PC-9 (cell line): ENCODE measurements at regions of chr2 and their contacts with region 1.

Region 1: GRCh38 chr2:3386448-3386958 is 7.0 kb downstream of the TRAPPC12 start:
- DNase-seq: no peak
- H3K4me3 ChIP-seq: no peak overlapping the region
- H3K27ac ChIP-seq: no peak overlapping the region
- H3K4me1 ChIP-seq: no peaks in the 10 kb centered on the region
- H3K27me3 ChIP-seq: no peaks in the 10 kb centered on the region
- CTCF ChIP-seq: no peak

Region 2: DNA sequence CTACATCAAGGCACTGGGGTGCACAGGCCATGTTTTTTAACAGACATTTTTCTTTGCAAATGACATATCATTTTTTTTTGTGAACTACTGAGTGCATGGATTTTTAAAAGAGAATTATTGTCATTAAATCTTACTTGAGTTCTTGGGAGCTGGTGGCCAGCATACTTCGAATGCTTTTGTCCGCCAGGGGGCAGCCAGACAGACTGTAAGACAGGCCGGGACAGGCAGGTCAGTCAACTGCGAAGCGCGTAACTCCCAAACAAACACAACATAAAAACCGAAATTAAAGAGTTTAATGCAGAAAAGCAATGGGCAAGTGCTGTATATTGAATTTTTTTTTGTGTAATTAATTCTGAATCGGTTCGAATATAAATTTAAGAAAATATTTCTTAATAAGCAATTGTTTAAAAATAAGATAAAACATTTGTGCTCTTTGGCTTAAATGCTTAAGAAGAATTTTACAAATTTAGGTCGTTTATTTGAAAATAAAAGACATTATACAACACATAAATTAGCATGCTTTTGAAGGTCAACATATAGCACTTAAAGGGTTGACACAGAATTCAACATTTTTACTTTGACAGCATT is 1500.0 kb before region 1 on chr2:
- CTCF ChIA-PET with region 1: interaction called, 13 read pairs
- POLR2A ChIA-PET with region 1: no interaction called
- intact Hi-C with region 1: no loop called
- DNase-seq: peak in 1 of 2 experiments; percentile 14
- H3K4me3 ChIP-seq: no peak overlapping the region
- H3K27ac ChIP-seq: no peak overlapping the region
- H3K4me1 ChIP-seq: no peaks in the 10 kb centered on the region
- H3K27me3 ChIP-seq: peaks cover 88% of the 10 kb centered on the region
- CTCF ChIP-seq: peak; percentile 78